ENCODE measurements at regions of chr1 and their contacts with region 1.

Region 1: GRCh38 chr1:109338091-109338490 is 31.3 kb upstream of the MYBPHL start:
- DNase-seq: no peak
- ATAC-seq: no peak
- H3K4me3 ChIP-seq: no peak overlapping the region
- H3K27ac ChIP-seq: no peak overlapping the region
- H3K4me1 ChIP-seq: no peaks in the 10 kb centered on the region
- H3K27me3 ChIP-seq: no peaks in the 10 kb centered on the region
- CTCF ChIP-seq: no peak

Region 2: DNA sequence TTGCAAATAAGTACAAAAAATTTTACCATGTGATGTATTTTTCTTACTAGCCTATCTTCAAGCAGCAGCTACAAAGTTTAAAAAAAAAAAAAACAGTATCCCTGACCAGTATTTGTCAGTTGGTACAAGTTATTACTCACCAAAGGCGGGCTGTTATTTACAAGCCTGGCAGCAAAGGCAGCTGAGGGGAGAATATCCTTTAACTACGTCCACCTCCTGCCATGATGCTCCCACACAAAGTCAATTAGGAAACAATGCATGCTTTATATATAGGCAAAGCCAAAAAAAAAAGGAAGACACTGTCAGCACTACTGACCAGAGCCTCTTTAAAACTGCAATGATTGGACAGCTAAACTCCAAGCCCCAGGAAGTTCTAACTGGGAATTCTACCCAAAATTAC is 74.5 kb after region 1 on chr1:
- CTCF ChIA-PET with region 1: interaction called, 11 read pairs
- POLR2A ChIA-PET with region 1: no interaction called
- in situ Hi-C with region 1: no loop called
- intact Hi-C with region 1: no loop called
- DNase-seq: no peak
- ATAC-seq: no peak
- H3K4me3 ChIP-seq: no peak overlapping the region
- H3K27ac ChIP-seq: no peak overlapping the region
- H3K4me1 ChIP-seq: no peaks in the 10 kb centered on the region
- H3K27me3 ChIP-seq: no peaks in the 10 kb centered on the region
- CTCF ChIP-seq: no peak